ENCODE measurements at regions of chr7 and their contacts with region 1.

Region 1: DNA sequence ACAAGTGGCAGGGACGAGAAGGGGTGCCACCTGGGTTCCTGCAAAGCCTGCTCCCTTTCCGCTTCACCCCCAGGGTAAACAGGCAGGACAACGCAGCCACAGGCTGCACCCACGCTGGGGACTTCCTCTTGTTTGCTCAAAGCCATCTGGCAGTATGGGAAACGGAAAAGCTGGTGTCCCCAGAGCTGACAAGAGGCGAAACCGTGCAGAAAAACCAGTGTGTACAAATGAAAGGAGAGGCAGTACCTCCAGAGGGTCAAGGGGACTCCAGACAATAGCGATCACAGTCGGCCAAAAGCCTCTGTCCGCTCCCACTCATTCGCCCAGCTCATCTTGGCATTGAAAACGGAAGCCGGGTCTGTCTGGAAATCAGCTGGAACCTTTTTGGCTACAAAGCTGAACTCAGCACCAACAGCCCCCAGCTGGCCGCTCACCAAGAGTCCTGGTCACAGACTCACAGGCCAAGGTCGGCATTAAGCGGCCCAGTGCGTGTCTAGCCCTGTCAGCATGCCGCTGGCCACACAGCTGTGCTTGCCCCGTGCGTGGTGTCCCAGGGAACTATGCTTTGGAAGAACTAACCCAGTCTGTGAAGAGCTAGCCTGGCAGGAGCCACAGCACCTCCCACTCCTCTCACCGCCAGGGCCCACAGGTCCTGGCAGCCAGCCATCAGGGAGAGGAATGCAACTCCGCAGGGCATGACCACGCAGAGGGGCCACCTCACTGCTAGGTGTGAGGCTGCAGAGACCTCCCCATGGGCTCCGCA is 10.4 kb downstream of the TNS3 start:
- DNase-seq: no peak
- H3K4me3 ChIP-seq: no peak overlapping the region
- H3K27ac ChIP-seq: peak overlapping the region; percentile 57 to 66
- H3K4me1 ChIP-seq: peaks cover 5% of the 10 kb centered on the region
- H3K27me3 ChIP-seq: no peaks in the 10 kb centered on the region
- CTCF ChIP-seq: no peak
- POLR2A ChIP-seq: no peak

Region 2: GRCh38 chr7:47453093-47454049 is 118.1 kb before region 1 on chr7:
- intact Hi-C with region 1: loop called (anchors 10 kb)
- DNase-seq: peak; percentile 22
- H3K4me3 ChIP-seq: peak overlapping the region in 1 of 2 donors; percentile 2
- H3K27ac ChIP-seq: peak overlapping the region; percentile 47 to 55
- H3K4me1 ChIP-seq: no peaks in the 10 kb centered on the region
- H3K27me3 ChIP-seq: no peaks in the 10 kb centered on the region
- CTCF ChIP-seq: no peak
- POLR2A ChIP-seq: no peak

Region 3: DNA sequence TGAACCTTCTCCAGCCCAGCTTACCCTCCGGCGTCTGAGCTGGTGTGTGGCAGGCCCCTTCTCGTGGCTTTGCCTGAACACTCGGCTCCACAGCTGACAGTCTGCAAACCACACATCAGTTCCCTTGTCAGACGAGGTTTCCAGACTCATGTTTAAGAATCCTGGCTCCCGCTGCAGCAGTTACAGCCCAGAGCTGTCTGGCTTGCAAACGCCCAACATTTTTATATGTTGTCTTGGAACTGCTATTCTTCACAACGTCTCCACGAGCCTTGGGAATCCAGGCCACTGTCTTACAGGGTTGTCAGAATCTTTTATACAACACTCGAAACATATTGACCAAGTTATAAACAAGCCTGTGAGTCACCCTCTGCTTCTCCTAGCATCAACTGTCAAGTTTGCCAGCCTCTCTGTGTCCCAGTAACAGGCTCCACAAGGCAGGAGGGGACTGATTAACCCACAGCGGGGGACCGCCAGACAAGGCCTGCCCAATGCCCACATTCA is 57.7 kb before region 1 on chr7:
- intact Hi-C with region 1: loop called (anchors 5 kb)
- DNase-seq: peak; percentile 26
- H3K4me3 ChIP-seq: no peak overlapping the region
- H3K27ac ChIP-seq: no peak overlapping the region
- H3K4me1 ChIP-seq: peaks cover 5% of the 10 kb centered on the region
- H3K27me3 ChIP-seq: no peaks in the 10 kb centered on the region
- CTCF ChIP-seq: no peak
- POLR2A ChIP-seq: no peak

Region 4: GRCh38 chr7:47536661-47537611 is 34.6 kb before region 1 on chr7:
- intact Hi-C with region 1: no loop called
- DNase-seq: peak; percentile 48
- H3K4me3 ChIP-seq: peak overlapping the region; percentile 36 to 37
- H3K27ac ChIP-seq: no peak overlapping the region
- H3K4me1 ChIP-seq: peaks cover 3% of the 10 kb centered on the region
- H3K27me3 ChIP-seq: no peaks in the 10 kb centered on the region
- CTCF ChIP-seq: no peak
- POLR2A ChIP-seq: no peak

Region 5: GRCh38 chr7:47600199-47601118 is 28.9 kb after region 1 on chr7:
- intact Hi-C with region 1: no loop called
- DNase-seq: no peak
- H3K4me3 ChIP-seq: no peak overlapping the region
- H3K27ac ChIP-seq: no peak overlapping the region
- H3K4me1 ChIP-seq: no peaks in the 10 kb centered on the region
- H3K27me3 ChIP-seq: no peaks in the 10 kb centered on the region
- CTCF ChIP-seq: no peak
- POLR2A ChIP-seq: no peak

Region 6: DNA sequence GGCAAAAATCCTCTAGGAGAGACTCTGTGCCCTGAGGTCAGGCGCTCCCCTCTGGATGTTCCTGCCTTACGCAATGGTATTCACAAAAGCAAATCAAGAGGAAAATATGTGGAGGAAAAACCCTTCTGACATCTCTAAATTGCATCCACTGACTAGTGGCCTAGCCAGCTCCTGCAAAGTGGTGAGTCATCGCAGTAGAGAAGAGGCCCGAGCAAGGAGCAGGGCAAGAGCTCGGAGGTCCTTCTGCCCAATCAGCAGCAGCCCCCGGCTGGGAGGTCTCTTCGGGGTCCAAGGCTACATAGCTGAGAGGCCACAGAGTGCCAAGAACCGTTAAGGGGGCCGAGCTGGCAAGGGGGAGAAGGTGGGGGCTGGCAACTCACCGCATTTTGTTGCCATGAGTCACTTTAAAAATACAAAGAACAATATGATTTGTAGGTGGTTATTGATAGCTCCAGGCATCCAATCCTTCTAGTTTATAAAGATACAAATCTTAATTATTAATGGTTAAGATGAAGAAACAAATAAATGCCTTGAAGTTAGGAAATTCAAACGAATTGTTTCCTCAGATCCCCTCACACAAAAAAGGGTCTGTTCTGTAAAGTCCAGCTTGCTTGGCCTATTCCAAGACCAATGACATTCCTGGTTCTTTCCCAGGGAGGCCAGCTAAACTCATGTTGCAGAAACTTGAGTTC is 215.2 kb after region 1 on chr7:
- intact Hi-C with region 1: loop called (anchors 10 kb)
- DNase-seq: peak; percentile 35
- H3K4me3 ChIP-seq: no peak overlapping the region
- H3K27ac ChIP-seq: no peak overlapping the region
- H3K4me1 ChIP-seq: no peaks in the 10 kb centered on the region
- H3K27me3 ChIP-seq: no peaks in the 10 kb centered on the region
- CTCF ChIP-seq: no peak
- POLR2A ChIP-seq: no peak